Psoas muscle (tissue), 8 donors: ENCODE measurements at regions of chr3 and their contacts with region 1.

Region 1: DNA sequence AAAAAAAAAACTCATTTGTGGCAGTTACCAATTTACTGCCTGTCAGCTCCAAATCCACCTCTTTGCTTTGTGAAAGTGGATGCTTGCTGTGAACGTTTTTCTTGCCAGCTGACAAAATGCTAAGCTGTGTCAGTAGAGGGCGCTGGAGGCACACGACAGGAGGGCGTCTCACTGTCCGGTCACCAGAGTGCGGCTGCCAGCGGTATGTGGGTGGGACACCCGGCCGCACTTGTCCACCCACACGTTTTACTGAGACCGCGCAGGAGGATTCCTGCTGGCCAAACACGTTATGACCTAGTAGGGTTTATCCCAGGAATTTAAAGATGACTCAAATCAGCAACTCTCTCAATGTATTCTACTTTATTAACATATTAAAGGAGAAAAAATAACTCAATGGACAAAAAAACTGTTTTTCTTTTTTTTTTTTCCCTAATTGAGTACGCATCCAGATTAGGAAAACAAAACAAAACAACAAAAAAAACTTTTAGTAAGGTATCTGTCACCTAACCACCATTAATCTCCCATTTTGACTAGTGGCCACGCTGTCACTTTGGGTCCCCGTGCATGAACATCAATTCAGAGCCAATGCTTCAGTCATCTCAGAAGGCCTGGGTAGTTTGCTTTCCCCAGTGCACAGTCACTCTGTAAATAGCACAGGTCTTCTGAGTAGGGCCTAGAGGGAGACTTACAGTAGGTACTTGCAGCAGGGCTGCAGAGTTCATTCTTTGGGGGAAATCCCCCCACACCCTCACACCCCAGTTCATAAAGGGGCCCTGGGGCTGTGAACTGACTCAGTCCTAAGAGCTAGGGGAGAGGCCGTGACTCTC is 43.8 kb upstream of the RPL35A start:
- DNase-seq: peak; percentile 90 to 92
- ATAC-seq: peak; percentile 94 to 99 (median 98)
- H3K4me3 ChIP-seq: no peak overlapping the region
- H3K27ac ChIP-seq: no peak overlapping the region
- H3K4me1 ChIP-seq: no peaks in the 10 kb centered on the region
- H3K27me3 ChIP-seq: no peaks in the 10 kb centered on the region
- CTCF ChIP-seq: peak; percentile 92

Region 2: GRCh38 chr3:197758512-197758911 is 147.7 kb before region 1 on chr3:
- intact Hi-C with region 1: no loop called
- DNase-seq: no peak
- ATAC-seq: peak in 2 of 4 donors; percentile 44 to 70
- H3K4me3 ChIP-seq: no peak overlapping the region
- H3K27ac ChIP-seq: peak overlapping the region; percentile 34
- H3K4me1 ChIP-seq: peaks cover 28% of the 10 kb centered on the region
- H3K27me3 ChIP-seq: no peaks in the 10 kb centered on the region
- CTCF ChIP-seq: no peak

Region 3: DNA sequence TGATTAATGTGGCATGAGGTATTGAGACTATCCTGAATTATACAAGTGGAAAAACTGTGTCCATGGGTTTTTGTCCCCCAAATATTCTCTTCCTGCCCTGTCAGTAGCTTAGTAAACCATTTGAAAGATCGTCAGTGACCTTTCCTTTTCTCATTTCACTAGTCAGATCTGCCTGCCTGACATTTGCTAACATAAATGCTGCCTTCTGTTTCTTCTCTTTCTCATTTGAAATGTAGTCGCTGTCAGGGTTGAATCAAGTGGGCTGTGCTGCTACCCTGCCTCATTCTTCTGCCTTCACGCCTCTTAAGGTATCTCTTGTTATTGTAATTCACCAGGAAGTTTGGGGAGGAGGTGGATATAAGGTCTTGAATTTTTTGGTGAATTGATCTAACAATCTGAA is 47.6 kb before region 1 on chr3:
- intact Hi-C with region 1: no loop called
- DNase-seq: no peak
- ATAC-seq: no peak
- H3K4me3 ChIP-seq: no peak overlapping the region
- H3K27ac ChIP-seq: no peak overlapping the region
- H3K4me1 ChIP-seq: no peaks in the 10 kb centered on the region
- H3K27me3 ChIP-seq: no peaks in the 10 kb centered on the region
- CTCF ChIP-seq: no peak

Region 4: DNA sequence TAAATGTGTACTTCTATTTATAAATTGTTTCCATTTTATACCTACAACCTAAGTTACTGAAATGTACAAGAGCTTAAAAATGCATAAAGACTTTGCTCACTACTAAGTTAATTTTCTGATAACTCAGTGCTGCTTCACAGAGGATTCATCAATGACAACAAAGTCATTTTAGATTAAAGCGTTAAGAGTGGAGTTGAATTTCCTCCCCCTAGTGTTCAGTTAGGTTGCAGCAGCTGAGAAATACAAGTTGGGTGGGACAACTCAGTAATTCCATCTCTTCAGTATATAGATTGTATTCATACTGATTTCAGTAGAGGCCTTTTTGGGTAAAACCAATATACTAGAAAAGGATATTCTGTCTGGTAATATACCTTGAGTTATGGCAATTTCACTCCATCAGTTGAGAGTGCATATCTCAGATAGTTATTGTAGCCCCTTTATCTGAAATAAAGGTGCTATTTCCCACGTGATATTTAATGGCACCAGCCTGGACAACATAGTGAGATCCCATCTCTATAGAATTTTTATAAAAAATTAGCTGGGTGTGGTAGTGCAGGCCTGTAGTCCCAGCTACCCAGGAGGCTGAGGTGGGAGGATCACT is 36.8 kb after region 1 on chr3:
- intact Hi-C with region 1: loop called (anchors 1 to 5 kb)
- DNase-seq: no peak
- ATAC-seq: peak in 3 of 4 donors; percentile 60 to 69 (median 62)
- H3K4me3 ChIP-seq: no peak overlapping the region
- H3K27ac ChIP-seq: no peak overlapping the region
- H3K4me1 ChIP-seq: no peaks in the 10 kb centered on the region
- H3K27me3 ChIP-seq: no peaks in the 10 kb centered on the region
- CTCF ChIP-seq: peak; percentile 69

Region 5: DNA sequence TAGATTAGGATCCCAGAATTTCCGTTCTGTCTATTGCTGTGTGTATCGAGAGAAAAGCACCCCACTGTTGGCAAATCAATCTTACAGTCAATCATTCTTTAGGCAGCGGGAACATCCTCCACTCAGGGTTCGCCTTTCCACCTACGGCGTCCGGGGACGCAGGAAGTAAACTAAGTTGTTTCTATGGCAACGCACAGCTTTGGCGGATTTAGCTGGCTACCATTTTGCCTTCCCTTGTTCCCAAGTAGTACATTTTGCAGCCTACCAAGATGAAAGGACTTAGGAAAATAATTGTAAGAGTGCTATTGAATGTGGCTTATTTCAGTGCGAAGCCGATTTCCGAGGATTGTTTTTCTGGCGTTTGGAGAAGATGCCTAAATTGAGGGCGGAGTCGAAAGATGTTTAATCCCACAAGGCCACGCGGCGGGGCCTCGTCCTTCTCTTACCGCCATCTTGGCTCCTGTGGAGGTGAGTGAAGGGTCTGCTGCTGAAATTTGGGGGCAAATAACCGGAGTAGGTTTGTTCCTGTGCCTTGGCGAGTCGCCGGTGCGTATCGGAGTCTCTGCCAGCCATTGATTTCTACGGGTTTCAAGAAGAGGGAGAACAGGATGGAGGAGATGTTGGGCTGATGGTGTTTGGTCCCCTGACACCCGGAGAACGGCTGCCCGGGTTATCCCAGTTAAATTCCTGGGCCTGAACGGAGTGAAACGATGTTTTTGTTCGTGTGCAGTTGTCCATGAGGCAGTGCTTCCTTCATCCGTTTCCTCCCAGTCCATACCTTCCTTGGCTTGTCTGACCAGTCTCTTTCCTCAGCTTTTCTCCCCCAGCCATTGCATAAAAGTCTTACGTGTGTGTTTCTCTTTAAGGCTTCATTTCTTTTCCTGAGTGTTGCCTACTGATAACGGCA is 43.8 kb after region 1 on chr3 and contains the start of gene RPL35A:
- intact Hi-C with region 1: loop called in 1 of 2 experiments (anchors 2 kb)
- DNase-seq: peak; percentile 85 to 91
- ATAC-seq: peak; percentile 89 to 95 (median 92)
- H3K4me3 ChIP-seq: peak within 1 kb of the TSS; percentile 77
- H3K27ac ChIP-seq: peak within 1 kb of the TSS; percentile 93
- H3K4me1 ChIP-seq: peaks cover 33% of the 10 kb centered on the region
- H3K27me3 ChIP-seq: no peaks in the 10 kb centered on the region
- CTCF ChIP-seq: no peak
- total RNA-seq, gene RPL35A: 467 to 703 (median 581) TPM